Activated B cell treated with CpG ODN at 0.5 μM for 24 hours (primary cell): ENCODE measurements at regions of chr16 and their contacts with region 1.

Region 1: GRCh38 chr16:71311553-71312158 is 22.5 kb upstream of the CMTR2 start:
- DNase-seq: no peak
- ATAC-seq: peak; percentile 45
- H3K4me3 Mint-ChIP-seq: no peak overlapping the region
- H3K27ac Mint-ChIP-seq: no peak overlapping the region
- H3K4me1 Mint-ChIP-seq: no peaks in the 10 kb centered on the region
- H3K27me3 Mint-ChIP-seq: peaks cover 34% of the 10 kb centered on the region
- CTCF ChIP-seq: no peak

Region 2: DNA sequence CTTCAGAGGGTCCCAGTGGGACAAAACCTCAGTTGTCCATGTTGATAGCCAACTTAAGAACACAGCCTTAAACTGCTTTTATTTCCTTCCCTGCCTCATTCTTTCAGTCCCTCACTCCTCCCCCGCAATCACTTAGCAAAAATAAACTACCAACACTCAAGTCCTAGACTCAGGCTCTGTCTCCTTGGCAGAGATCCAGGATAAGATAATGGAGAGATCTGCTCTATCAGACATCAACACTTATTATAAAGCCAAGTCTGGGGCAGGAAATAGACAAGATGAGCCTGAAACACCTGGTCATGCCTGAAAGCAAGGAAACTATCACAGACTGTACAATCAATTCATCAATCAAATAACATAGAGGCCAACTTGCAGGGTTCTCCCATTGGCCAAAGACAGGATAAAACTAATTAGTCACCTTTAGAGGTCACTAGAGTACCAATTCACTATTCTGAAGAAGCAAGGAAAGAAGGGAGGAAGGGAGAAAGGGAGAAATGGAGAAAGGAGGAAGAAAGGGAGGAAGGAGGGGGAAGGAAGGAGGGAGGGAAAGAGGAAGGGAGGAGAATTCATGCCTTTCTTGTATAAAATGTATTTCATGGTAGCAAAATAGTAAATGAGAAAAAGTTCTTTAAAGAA is 96.8 kb before region 1 on chr16:
- CTCF ChIA-PET with region 1: interaction called, 15 read pairs
- POLR2A ChIA-PET with region 1: no interaction called
- intact Hi-C with region 1: loop called (anchors 1 kb)
- DNase-seq: no peak
- ATAC-seq: no peak
- H3K4me3 Mint-ChIP-seq: no peak overlapping the region
- H3K27ac Mint-ChIP-seq: no peak overlapping the region
- H3K4me1 Mint-ChIP-seq: no peaks in the 10 kb centered on the region
- H3K27me3 Mint-ChIP-seq: peaks cover 11% of the 10 kb centered on the region
- CTCF ChIP-seq: no peak

Region 3: GRCh38 chr16:71249399-71249798 is 62.3 kb before region 1 on chr16:
- CTCF ChIA-PET with region 1: interaction called, 11 read pairs
- POLR2A ChIA-PET with region 1: no interaction called
- intact Hi-C with region 1: no loop called
- DNase-seq: no peak
- ATAC-seq: no peak
- H3K4me3 Mint-ChIP-seq: no peak overlapping the region
- H3K27ac Mint-ChIP-seq: no peak overlapping the region
- H3K4me1 Mint-ChIP-seq: no peaks in the 10 kb centered on the region
- H3K27me3 Mint-ChIP-seq: peaks cover 5% of the 10 kb centered on the region
- CTCF ChIP-seq: no peak

Region 4: GRCh38 chr16:71441348-71441781 is 129.7 kb after region 1 on chr16:
- CTCF ChIA-PET with region 1: no interaction called
- POLR2A ChIA-PET with region 1: no interaction called
- intact Hi-C with region 1: no loop called
- DNase-seq: no peak
- ATAC-seq: no peak
- H3K4me3 Mint-ChIP-seq: no peak overlapping the region
- H3K27ac Mint-ChIP-seq: no peak overlapping the region
- H3K4me1 Mint-ChIP-seq: no peaks in the 10 kb centered on the region
- H3K27me3 Mint-ChIP-seq: peaks cover 19% of the 10 kb centered on the region
- CTCF ChIP-seq: no peak